Activated CD8-positive, alpha-beta T cell treated with anti-CD3 and anti-CD28 coated beads, Interleukin-2, amount 10 ng/mL, durations not matched to agents 7 days and 5 days (primary cell): ENCODE measurements at regions of chr11 and their contacts with region 1.

Region 1: DNA sequence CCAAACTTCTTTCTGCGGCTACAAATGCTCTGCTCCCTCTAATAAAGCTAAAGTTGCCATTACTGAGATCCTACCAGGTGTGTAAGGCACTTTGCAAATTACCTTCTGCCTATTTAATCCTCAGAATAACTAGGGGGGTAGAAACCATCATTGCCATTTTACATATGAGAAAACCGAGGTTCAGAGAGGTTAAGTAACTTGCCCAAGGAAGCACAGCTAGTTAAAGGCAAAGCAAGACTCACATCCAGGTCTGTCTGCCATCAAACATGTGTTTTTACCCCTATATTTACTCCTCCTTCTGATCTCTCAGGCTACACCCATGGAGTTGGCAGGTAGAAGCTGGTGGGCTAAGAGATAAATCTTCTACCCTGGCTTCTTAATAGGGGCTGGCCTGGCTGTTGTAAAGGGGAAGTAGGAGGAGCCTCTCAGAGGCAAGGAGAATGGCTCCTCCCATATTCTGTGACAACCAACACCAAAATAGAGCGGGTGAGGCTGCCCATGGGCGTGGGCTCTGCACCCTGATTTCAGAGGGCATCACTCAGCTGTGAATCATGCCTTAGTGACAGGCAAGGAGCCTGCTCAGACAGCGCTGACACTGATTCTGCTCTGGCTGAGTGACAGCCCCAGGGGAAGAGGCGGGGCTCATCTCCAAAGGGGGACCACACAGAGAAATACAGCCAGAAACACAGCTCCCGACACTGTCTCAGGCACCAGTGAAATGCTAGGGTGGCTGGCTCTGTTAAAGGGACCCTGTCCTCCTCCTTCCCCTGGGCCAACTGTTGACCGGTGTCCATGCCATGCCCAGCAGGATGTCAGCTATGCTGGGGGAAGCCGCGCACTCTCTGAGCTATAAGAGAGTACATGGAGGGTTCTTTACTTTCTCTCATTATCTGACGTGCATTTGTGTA is 106.8 kb downstream of the ABTB2 start:
- DNase-seq: peak; percentile 81
- ATAC-seq: peak; percentile 91
- H3K4me3 Mint-ChIP-seq: peak overlapping the region; percentile 25
- H3K27ac Mint-ChIP-seq: peak overlapping the region; percentile 78
- H3K4me1 Mint-ChIP-seq: peaks cover 59% of the 10 kb centered on the region
- H3K27me3 Mint-ChIP-seq: no peaks in the 10 kb centered on the region

Region 2: GRCh38 chr11:34204396-34205279 is 46.3 kb before region 1 on chr11:
- CTCF ChIA-PET with region 1: interaction called, 11 read pairs
- POLR2A ChIA-PET with region 1: no interaction called
- DNase-seq: no peak
- ATAC-seq: no peak
- H3K4me3 Mint-ChIP-seq: no peak overlapping the region
- H3K27ac Mint-ChIP-seq: no peak overlapping the region
- H3K4me1 Mint-ChIP-seq: peaks cover 59% of the 10 kb centered on the region
- H3K27me3 Mint-ChIP-seq: peaks cover 2% of the 10 kb centered on the region

Region 3: DNA sequence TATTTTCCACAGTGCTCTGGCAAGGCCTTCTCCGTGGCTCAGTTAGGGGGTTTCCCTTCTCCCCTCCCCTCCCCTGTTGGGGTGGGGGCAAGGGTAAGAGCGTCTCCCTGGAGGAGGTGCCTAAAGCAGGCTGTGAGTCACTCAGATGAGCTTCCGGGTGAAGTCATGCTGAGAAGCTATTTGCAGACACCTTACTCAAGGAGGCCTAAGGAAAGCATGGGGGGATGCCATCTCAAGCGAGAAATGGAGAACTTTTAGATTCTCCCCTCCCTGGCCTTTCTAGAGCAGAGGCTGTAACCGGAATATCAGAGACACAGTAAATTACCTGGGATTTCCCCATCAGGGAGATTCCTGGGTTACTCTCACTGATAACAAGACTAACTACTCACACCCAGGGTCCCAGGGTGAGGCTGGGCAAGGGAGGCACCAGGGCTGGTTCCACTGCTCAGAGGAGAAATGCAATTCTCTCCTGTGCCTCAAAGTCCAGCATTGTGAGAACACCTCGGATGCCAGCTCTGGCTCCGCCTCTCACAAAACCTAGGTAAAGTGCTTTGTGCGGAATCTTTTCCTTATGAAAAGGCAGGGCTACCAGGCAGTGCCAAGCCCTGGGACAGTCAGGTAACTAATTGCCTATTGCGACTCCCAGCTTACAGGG is 16.8 kb before region 1 on chr11:
- CTCF ChIA-PET with region 1: interaction called, 20 read pairs
- POLR2A ChIA-PET with region 1: interaction called, 7 read pairs
- DNase-seq: peak; percentile 80
- ATAC-seq: peak; percentile 95
- H3K4me3 Mint-ChIP-seq: no peak overlapping the region
- H3K27ac Mint-ChIP-seq: peak overlapping the region; percentile 72
- H3K4me1 Mint-ChIP-seq: peaks cover 29% of the 10 kb centered on the region
- H3K27me3 Mint-ChIP-seq: no peaks in the 10 kb centered on the region

Region 4: GRCh38 chr11:34380696-34381095 is 129.7 kb after region 1 on chr11:
- CTCF ChIA-PET with region 1: no interaction called
- POLR2A ChIA-PET with region 1: no interaction called
- DNase-seq: no peak
- ATAC-seq: no peak
- H3K4me3 Mint-ChIP-seq: no peak overlapping the region
- H3K27ac Mint-ChIP-seq: no peak overlapping the region
- H3K4me1 Mint-ChIP-seq: peaks cover 2% of the 10 kb centered on the region
- H3K27me3 Mint-ChIP-seq: peaks cover 7% of the 10 kb centered on the region